Sciatic nerve (tissue), 2 donors: ENCODE measurements at regions of chr9 and their contacts with region 1.

Region 1: GRCh38 chr9:130701056-130702022 is 7.8 kb downstream of the EXOSC2 start:
- DNase-seq: peak; percentile 90
- ATAC-seq: peak; percentile 97

Region 2: GRCh38 chr9:130660683-130661450 is 40.5 kb before region 1 on chr9:
- intact Hi-C with region 1: no loop called
- DNase-seq: no peak
- ATAC-seq: peak; percentile 18

Region 3: GRCh38 chr9:130732131-130732530 is 30.8 kb after region 1 on chr9:
- intact Hi-C with region 1: loop called (anchors 2 kb)
- DNase-seq: no peak
- ATAC-seq: no peak

Region 4: GRCh38 chr9:130932255-130933079 is 231.1 kb after region 1 on chr9:
- intact Hi-C with region 1: no loop called
- DNase-seq: no peak
- ATAC-seq: peak; percentile 38

Region 5: DNA sequence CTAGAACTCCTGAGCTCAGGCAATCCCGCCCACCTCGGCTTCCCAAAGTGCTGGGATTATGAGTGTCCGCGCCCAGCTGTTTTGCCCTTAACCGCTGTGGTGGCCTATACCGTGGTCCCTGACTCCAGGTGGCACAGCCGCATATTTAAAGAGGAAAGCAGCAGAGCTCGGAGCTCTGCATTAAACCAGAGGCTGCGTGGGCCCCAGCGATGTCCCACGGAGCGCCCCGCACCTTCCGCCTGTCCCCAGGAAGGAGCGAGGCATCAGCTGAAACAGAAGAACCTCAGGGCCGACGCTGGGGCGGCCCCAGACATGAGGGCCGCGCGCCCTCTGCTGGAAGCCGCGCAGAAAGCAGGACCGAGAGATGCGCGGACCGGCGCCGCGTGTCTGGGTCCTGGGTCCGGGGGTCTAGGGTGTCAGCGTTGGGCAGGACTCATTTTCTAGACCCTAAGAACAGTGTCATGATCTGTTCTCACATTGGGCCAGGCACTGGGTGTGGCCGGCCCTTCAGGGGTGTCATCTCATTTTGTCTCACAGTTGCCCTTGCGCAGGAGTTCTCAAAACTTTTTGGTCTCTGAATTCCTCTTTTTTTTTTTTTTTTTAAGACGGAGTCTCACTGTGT is 345.4 kb after region 1 on chr9:
- intact Hi-C with region 1: loop called (anchors 10 kb)
- DNase-seq: peak; percentile 78
- ATAC-seq: peak; percentile 87